HepG2 (cell line): ENCODE measurements at regions of chr17 and their contacts with region 1.

Region 1: DNA sequence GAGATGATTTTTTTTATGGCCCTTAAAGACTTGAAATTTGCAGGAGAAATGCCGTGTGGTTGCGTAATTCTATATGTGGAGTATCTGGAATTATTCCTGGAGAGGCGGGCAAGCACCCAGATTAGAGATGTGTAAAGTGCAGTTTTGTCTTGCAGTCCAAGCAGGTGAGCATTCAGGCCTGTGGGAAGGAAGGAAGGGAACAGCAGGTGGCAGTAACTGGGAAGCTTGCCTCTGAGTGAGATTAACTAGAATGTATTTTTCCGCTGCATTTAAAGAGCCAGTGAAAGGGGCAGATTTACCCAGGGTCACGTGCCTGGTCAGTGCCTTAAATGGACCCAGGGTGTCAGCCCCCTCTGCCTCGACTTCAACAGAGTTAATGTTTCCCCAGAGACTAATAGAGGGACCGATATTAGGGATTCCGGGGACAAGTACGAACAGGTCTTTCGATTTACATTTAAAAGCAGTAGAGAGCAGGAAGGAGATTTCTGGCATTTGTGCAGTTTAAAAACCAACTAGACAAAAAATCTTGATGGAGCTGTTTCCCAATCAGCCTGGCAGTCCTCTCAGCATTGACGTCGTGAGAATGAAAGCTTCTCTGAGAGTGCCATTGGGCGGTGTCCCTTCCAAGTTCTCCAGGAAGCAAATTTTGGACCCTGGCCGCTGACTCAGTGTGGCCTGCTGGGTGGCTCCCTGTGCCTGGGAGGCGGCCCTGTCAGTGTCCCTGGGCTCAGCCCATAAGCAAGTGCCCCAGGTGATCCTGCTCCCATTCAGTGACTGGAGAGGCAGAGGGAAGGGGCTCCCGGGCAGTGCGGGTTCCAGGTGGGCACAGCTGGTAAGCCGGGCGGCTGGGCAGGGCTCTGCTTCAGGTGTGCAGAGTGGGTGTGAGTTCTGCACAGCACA is 38.2 kb downstream of the KSR1 start:
- DNase-seq: peak; percentile 84
- ATAC-seq: peak; percentile 86
- H3K4me3 ChIP-seq: peak overlapping the region; percentile 52 to 70 (median 57)
- H3K27ac ChIP-seq: peak overlapping the region; percentile 73
- H3K4me1 ChIP-seq: peaks cover 69% of the 10 kb centered on the region
- H3K27me3 ChIP-seq: no peaks in the 10 kb centered on the region
- CTCF ChIP-seq: peak; percentile 89
- EP300 ChIP-seq: peak; percentile 36 to 45; a peak in 1 of 4 replicates
- POLR2A ChIP-seq: peak; percentile 32 to 61; a peak in 2 of 4 replicates
- RAD21 ChIP-seq: peak; percentile 81

Region 2: DNA sequence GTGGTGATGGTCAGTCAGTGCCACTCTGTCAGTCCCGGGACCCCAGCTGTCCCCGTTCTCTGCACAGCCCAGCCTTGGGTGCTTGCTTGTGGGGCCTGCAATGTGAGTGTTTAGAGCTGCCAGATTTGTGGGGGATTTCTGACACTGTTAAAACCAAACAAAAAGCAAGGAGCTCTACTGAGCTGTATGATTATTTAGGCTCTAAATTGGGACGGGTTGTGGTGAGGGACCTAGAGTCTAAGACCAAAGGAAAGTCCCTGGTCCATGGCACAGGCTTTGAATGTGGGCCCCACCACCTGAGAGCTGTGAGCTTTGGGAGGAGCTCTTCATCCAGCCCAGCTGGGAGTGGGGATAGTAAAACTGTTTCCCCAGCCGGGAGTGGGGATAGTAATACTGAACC is 25.1 kb after region 1 on chr17:
- CTCF ChIA-PET with region 1: no interaction called
- POLR2A ChIA-PET with region 1: interaction called, 15 read pairs
- in situ Hi-C with region 1: no loop called
- intact Hi-C with region 1: no loop called
- DNase-seq: no peak
- ATAC-seq: no peak
- H3K4me3 ChIP-seq: no peak overlapping the region
- H3K27ac ChIP-seq: no peak overlapping the region
- H3K4me1 ChIP-seq: peaks cover 61% of the 10 kb centered on the region
- H3K27me3 ChIP-seq: no peaks in the 10 kb centered on the region
- CTCF ChIP-seq: no peak
- EP300 ChIP-seq: no peak
- POLR2A ChIP-seq: no peak
- RAD21 ChIP-seq: no peak

Region 3: GRCh38 chr17:27544350-27545131 is 50.1 kb after region 1 on chr17:
- CTCF ChIA-PET with region 1: no interaction called
- POLR2A ChIA-PET with region 1: interaction called, 12 read pairs
- in situ Hi-C with region 1: no loop called
- intact Hi-C with region 1: no loop called
- DNase-seq: no peak
- ATAC-seq: no peak
- H3K4me3 ChIP-seq: no peak overlapping the region
- H3K27ac ChIP-seq: no peak overlapping the region
- H3K4me1 ChIP-seq: peaks cover 70% of the 10 kb centered on the region
- H3K27me3 ChIP-seq: no peaks in the 10 kb centered on the region
- CTCF ChIP-seq: no peak
- EP300 ChIP-seq: no peak
- POLR2A ChIP-seq: no peak
- RAD21 ChIP-seq: no peak

Region 4: GRCh38 chr17:27569884-27570577 is 75.6 kb after region 1 on chr17:
- CTCF ChIA-PET with region 1: interaction called, 3 read pairs
- POLR2A ChIA-PET with region 1: interaction called, 7 read pairs
- in situ Hi-C with region 1: no loop called
- intact Hi-C with region 1: loop called (anchors 1 kb)
- DNase-seq: peak; percentile 87
- ATAC-seq: peak; percentile 87
- H3K4me3 ChIP-seq: peak overlapping the region in 1 of 3 experiments; percentile 30; a peak in 2 of 6 replicates
- H3K27ac ChIP-seq: peak overlapping the region; percentile 35
- H3K4me1 ChIP-seq: peaks cover 55% of the 10 kb centered on the region
- H3K27me3 ChIP-seq: no peaks in the 10 kb centered on the region
- CTCF ChIP-seq: no peak; the same call in 1 of the 2 replicates
- EP300 ChIP-seq: peak; percentile 27 to 66; a peak in 2 of 4 replicates
- POLR2A ChIP-seq: no peak
- RAD21 ChIP-seq: no peak